ENCODE measurements at regions of chr15 and their contacts with region 1.

Region 1: GRCh38 chr15:44711356-44712107 is at the start of gene B2M:
- DNase-seq: peak; percentile 97
- ATAC-seq: peak; percentile 93
- H3K4me3 ChIP-seq: peak within 1 kb of the TSS; percentile 96
- H3K27ac ChIP-seq: peak within 1 kb of the TSS; percentile 100
- H3K4me1 ChIP-seq: peaks cover 43% of the 10 kb centered on the region
- H3K27me3 ChIP-seq: no peaks in the 10 kb centered on the region
- CTCF ChIP-seq: no peak
- total RNA-seq, gene B2M: 4,033 TPM

Region 2: GRCh38 chr15:44381236-44381635 is 330.3 kb before region 1 on chr15:
- intact Hi-C with region 1: no loop called
- DNase-seq: no peak
- ATAC-seq: no peak
- H3K4me3 ChIP-seq: no peak overlapping the region
- H3K27ac ChIP-seq: no peak overlapping the region
- H3K4me1 ChIP-seq: peaks cover 3% of the 10 kb centered on the region
- H3K27me3 ChIP-seq: no peaks in the 10 kb centered on the region
- CTCF ChIP-seq: no peak

Region 3: GRCh38 chr15:44633603-44634002 is 77.9 kb before region 1 on chr15:
- intact Hi-C with region 1: no loop called
- DNase-seq: no peak
- ATAC-seq: no peak
- H3K4me3 ChIP-seq: no peak overlapping the region
- H3K27ac ChIP-seq: no peak overlapping the region
- H3K4me1 ChIP-seq: no peaks in the 10 kb centered on the region
- H3K27me3 ChIP-seq: no peaks in the 10 kb centered on the region
- CTCF ChIP-seq: no peak

Region 4: GRCh38 chr15:44663409-44664308 is 47.9 kb before region 1 on chr15 and contains the start of gene SPG11:
- intact Hi-C with region 1: loop called (anchors 10 kb)
- DNase-seq: peak; percentile 99
- ATAC-seq: peak; percentile 98
- H3K4me3 ChIP-seq: peak within 1 kb of the TSS; percentile 91
- H3K27ac ChIP-seq: peak within 1 kb of the TSS; percentile 99
- H3K4me1 ChIP-seq: peaks cover 24% of the 10 kb centered on the region
- H3K27me3 ChIP-seq: no peaks in the 10 kb centered on the region
- CTCF ChIP-seq: peak; percentile 93
- total RNA-seq, gene SPG11: 97.6 TPM